ENCODE measurements at regions of chr19 and their contacts with region 1.

Region 1: DNA sequence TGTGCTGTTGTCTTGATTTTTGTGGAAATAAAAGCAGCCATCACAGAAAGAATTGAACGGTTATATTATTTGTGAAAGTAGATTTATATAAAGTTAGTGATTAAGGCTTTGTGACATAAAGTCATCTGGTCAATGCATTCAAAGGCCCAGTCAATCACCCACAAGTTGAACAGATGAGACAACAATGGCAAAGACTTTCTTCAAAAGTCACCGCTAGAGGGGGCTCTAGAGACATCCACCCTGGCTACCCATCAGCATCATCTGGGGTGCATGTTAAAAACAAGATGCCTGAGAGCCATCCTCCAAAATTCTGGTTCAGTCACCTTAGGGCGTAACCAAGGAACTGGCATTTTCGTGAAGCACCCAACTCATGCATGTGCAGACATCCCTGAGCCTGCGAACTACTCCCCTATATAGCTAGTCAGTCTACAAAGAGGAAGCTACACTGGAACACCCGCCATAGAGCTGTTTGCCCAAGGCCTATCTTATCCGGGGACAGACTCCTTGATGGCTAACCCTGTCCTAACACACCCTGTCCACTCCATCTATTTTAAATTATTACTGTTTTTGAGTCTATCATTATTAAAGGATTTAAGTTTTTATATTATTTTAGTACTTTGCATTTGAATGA is 970.5 kb downstream of the UQCRFS1 start:
- DNase-seq: no peak
- ATAC-seq: no peak
- H3K4me3 ChIP-seq: no peak overlapping the region
- H3K27ac ChIP-seq: no peak overlapping the region
- H3K4me1 ChIP-seq: no peaks in the 10 kb centered on the region
- H3K27me3 ChIP-seq: peaks cover 0 to 7% (median 0%) of the 10 kb centered on the region in 9 donors
- CTCF ChIP-seq: peak; percentile 23 to 62 (median 46)
- POLR2A ChIP-seq: no peak

Region 2: DNA sequence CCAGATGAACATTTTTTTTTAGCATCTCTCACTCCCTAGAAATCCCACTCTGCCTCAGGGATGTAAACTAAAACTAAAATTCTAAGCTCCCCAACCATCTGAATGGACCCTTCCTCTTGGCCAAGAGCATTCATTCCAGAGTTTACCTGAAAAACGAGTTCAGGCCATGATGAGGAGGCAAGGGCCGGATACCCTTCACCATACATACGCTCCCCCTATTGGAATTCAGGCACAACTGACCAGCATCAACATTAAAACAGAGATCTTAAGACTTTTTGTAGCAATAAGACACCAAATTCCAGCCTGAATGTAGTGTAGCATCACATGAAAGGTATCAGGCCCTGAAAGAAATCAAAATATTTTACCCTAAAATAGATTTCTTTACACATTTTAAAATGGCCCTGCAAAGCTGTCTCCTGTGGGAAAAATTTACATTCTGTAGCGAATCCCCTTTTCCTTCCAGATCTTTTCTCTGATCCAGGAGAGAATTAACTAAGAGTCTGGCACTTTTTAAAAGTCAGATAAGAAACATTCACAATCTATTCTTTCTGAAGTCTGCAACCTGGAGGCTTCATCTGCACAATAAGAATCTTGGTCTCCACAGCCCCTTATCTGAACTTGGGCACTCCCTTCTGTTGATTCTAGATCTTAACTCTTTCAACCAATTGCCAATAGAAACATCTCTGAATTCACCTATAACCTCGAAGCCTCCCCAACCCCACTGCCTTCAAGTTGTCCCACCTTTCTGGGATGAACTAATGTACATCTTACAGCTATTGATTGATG is 82.1 kb after region 1 on chr19:
- intact Hi-C with region 1: loop called in 5 of 10 experiments (anchors 5 to 10 kb)
- DNase-seq: no peak
- ATAC-seq: no peak
- H3K4me3 ChIP-seq: no peak overlapping the region
- H3K27ac ChIP-seq: no peak overlapping the region
- H3K4me1 ChIP-seq: peaks cover 0 to 4% (median 0%) of the 10 kb centered on the region in 12 donors
- H3K27me3 ChIP-seq: no peaks in the 10 kb centered on the region
- CTCF ChIP-seq: no peak
- POLR2A ChIP-seq: no peak